A673 (cell line): ENCODE measurements at regions of chr2 and their contacts with region 1.

Region 1: GRCh38 chr2:103161456-103162289 is 399.8 kb downstream of the TMEM182 start:
- DNase-seq: peak; percentile 64
- H3K4me3 ChIP-seq: no peak overlapping the region
- H3K27ac ChIP-seq: no peak overlapping the region
- H3K4me1 ChIP-seq: no peaks in the 10 kb centered on the region
- H3K27me3 ChIP-seq: no peaks in the 10 kb centered on the region
- CTCF ChIP-seq: peak; percentile 79

Region 2: GRCh38 chr2:102841107-102841840 is 320.4 kb before region 1 on chr2:
- CTCF ChIA-PET with region 1: no interaction called
- POLR2A ChIA-PET with region 1: no interaction called
- intact Hi-C with region 1: loop called (anchors 5 kb)
- DNase-seq: peak; percentile 71
- H3K4me3 ChIP-seq: no peak overlapping the region
- H3K27ac ChIP-seq: no peak overlapping the region
- H3K4me1 ChIP-seq: no peaks in the 10 kb centered on the region
- H3K27me3 ChIP-seq: no peaks in the 10 kb centered on the region
- CTCF ChIP-seq: peak; percentile 64

Region 3: GRCh38 chr2:104412384-104412783 is 1250.7 kb after region 1 on chr2:
- CTCF ChIA-PET with region 1: no interaction called
- POLR2A ChIA-PET with region 1: no interaction called
- intact Hi-C with region 1: loop called (anchors 1 kb)
- DNase-seq: peak; percentile 44
- H3K4me3 ChIP-seq: no peak overlapping the region
- H3K27ac ChIP-seq: no peak overlapping the region
- H3K4me1 ChIP-seq: no peaks in the 10 kb centered on the region
- H3K27me3 ChIP-seq: no peaks in the 10 kb centered on the region
- CTCF ChIP-seq: peak; percentile 73

Region 4: DNA sequence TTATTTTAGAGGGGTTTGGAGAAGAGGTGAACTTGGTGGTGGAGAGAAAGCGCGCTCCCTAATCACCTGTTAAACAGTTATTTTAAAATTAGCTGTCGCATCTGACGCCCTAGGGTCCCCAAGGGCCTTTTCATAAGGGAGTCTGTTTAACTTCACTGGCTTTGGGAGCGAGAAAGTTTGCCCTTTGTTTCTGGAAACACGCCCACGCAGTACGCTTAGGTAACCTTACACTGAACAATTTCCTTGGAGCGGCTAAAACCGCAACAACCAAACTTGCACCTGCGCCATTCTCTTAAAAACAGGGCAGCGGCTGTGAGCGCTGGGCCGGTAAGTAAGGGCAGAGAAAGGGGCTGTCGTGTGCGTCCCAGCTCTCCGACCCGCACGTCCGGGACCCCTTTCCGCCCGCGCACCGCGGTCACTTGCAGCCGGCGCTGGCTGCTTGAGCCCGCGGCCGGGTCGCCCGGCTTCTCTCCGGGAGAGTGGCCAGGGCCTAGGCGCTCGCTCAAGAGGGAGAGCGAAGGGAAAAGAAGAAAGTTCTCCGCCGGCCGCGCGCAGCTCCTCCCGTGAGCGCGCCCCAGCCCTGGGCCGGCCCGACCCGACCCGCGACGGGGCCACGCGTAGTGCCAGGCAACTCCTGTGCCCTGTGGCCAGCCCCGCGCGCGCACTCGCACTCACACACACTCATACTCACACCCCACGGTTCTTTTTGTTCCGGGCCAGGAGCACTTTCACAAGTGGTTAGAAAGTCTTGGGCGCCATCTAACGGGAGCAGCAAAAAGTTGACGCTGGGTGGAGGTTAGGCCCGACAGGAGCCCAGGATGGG is 1711.4 kb after region 1 on chr2:
- CTCF ChIA-PET with region 1: no interaction called
- POLR2A ChIA-PET with region 1: no interaction called
- intact Hi-C with region 1: loop called (anchors 2 kb)
- DNase-seq: peak; percentile 84
- H3K4me3 ChIP-seq: peak overlapping the region; percentile 57
- H3K27ac ChIP-seq: no peak overlapping the region
- H3K4me1 ChIP-seq: no peaks in the 10 kb centered on the region
- H3K27me3 ChIP-seq: peaks cover 50% of the 10 kb centered on the region
- CTCF ChIP-seq: peak; percentile 79